ENCODE measurements at regions of chr1 and their contacts with region 1.

Region 1: DNA sequence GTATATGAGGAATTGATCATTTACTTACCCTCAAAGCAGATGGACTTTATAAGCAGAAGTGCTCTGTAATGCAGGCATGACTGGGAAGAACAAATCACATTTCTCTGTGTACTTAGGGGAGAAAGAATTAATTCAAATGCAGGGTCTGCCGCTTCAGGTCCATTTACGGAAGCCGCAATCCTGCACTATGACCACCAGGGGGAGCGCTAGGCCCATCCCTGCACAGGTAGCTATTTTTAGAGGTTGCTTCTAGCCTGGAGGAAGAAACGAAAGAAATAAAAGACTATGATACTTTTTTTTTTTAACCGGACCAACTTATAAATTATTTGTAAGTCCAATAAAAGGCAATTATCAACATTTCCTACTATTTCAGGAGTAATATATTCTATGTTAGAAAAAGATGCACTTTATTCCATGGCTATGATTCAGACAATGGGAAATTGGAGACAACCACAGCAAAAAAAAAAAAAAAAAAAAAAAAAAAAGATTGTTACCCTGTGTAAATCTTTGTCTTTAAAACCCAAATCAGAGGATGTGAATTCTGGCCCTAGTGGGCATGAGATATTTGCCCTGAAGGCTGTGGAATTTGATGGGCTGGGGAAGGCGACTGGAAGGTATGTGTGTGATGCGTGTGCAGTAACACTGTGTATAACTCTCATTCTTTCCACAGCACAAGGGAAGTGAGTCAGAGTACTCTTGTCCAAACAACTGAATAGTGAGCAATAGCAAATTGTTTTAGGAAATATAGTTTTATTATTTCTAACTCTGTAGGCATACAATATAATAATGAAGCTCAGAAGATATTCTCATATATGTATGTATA is 12.9 kb upstream of the FYB2 start:
- DNase-seq: peak; percentile 64
- CTCF ChIP-seq: peak; percentile 90

Region 2: GRCh38 chr1:56821140-56821797 is 10.8 kb before region 1 on chr1:
- CTCF ChIA-PET with region 1: interaction called, 45 read pairs
- POLR2A ChIA-PET with region 1: no interaction called
- DNase-seq: peak; percentile 80
- CTCF ChIP-seq: peak; percentile 96

Region 3: GRCh38 chr1:56843544-56843943 is 11.5 kb after region 1 on chr1:
- CTCF ChIA-PET with region 1: interaction called, 30 read pairs
- POLR2A ChIA-PET with region 1: no interaction called
- DNase-seq: no peak
- CTCF ChIP-seq: no peak

Region 4: DNA sequence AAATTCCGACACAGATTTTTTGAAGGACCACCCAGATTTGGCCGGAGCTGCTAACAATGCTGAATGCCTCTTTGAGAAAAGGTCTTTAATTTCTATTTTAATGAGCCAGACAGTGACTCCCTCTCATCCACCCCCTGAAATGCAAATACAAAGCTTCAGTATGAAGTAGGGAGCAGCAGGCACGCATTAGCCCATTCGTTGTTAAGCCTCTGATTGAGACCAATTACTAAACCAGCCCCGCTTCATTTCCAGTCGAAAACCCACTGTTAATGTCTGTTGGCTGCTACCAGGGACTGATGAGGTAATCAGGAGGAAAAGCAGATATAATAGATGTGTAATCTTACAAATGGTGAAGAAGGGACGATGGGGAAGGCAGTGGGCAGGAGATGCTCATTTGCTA is 17.7 kb after region 1 on chr1:
- CTCF ChIA-PET with region 1: interaction called, 13 read pairs
- POLR2A ChIA-PET with region 1: no interaction called
- DNase-seq: no peak
- CTCF ChIP-seq: no peak

Region 5: DNA sequence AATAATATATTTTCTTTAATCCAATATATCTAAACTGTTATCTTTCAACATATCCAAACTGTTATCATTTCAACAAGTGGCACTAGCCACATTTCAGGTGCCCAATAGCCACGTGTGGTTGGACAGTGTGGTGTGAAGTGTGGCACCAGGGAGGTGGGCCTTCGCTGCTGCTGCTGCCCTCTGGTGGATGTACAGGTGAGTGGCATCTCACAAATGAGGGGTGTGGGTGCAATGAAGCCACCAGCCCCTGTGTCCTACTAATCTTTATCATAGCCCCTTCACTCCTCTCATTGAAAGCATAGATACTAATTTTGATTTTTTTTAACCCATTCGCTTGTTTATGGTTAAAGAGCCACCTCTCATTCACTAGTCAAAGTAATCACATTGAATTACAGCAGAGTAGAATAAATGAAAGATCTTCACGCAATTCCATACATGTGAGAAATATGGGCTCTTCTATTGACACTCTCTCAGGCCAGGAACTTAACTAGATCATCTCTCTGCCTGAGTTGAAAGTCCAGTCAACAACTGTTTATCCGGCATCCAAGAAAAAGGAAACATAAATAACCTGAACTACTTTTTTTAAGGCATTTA is 1215.3 kb after region 1 on chr1:
- CTCF ChIA-PET with region 1: interaction called, 15 read pairs
- POLR2A ChIA-PET with region 1: no interaction called
- DNase-seq: peak; percentile 54
- CTCF ChIP-seq: peak; percentile 66